Activated CD4-positive, alpha-beta T cell treated with anti-CD3 and anti-CD28 coated beads, Interleukin-2, amount 10 ng/mL, durations not matched to agents 24 days and 14 days (primary cell): ENCODE measurements at regions of chr15 and their contacts with region 1.

Region 1: DNA sequence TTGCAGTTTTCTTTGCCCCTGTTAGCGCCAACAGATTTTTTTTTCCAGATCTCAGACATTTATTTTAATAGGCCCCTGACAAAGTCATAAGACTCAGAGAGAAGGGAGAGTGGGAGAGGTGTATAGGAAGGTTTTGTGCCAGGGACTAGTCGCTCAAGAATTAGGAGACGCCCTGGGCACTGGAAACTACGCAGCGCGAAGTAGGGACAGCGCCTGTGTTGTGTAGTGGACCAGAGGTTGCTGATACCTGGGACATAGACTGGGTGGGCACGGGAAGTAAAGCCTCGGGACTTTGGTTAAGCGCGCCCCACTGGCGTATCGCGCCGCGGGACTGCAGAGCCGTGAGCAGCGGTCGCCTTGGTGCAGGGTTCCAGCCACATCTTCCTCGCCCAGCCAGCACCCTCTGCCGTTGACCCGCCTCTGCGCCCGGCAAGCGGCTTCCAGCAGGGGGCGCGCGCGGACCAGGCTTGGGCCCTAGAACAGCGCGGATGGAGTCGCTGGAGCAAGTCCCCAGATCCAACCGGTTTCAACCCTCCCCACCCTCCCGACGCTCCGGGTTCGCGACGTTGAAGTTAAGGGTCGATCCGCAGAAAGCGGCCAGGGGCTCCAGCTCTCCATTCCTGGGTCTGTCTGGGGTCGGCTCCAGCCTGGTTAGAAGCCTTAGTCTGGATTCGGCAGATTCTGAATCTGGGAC is 3.0 kb upstream of the ISLR2 start:
- DNase-seq: peak; percentile 96
- H3K4me3 Mint-ChIP-seq: peak overlapping the region; percentile 26
- H3K27ac Mint-ChIP-seq: no peak overlapping the region
- H3K4me1 Mint-ChIP-seq: peaks cover 11% of the 10 kb centered on the region
- H3K27me3 Mint-ChIP-seq: peaks cover 61% of the 10 kb centered on the region

Region 2: DNA sequence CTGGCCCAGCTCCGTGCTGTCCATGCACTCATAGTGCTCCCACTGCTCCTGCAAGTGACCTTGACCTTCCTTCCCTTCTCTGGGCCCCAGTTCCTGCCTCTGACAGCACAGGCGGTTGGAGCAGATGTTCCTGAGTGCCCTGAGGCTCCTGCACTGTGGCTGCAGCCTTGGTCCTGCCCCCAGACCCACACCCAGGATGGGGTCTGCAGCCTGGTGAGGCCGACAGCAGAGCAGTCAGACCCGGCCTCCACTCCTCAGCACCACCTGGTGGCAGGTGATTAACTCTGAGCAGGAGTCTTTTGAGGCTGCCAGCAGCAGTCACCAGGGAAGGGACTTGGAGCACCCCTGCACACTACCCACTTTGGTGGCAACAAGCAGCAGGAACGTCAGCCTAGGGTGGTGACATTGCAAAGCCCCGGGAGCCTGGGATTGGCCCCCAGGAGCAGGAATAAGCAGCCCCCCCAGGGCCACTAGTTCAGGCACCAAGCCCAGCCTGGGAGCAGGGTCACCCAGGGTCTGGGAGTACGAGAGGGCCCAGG is 175.5 kb after region 1 on chr15:
- intact Hi-C with region 1: loop called (anchors 1 kb)
- DNase-seq: peak; percentile 78
- H3K4me3 Mint-ChIP-seq: no peak overlapping the region
- H3K27ac Mint-ChIP-seq: no peak overlapping the region
- H3K4me1 Mint-ChIP-seq: no peaks in the 10 kb centered on the region
- H3K27me3 Mint-ChIP-seq: peaks cover 37% of the 10 kb centered on the region

Region 3: GRCh38 chr15:74322181-74323076 is 195.0 kb after region 1 on chr15:
- intact Hi-C with region 1: loop called (anchors 1 kb)
- DNase-seq: peak; percentile 85
- H3K4me3 Mint-ChIP-seq: no peak overlapping the region
- H3K27ac Mint-ChIP-seq: no peak overlapping the region
- H3K4me1 Mint-ChIP-seq: no peaks in the 10 kb centered on the region
- H3K27me3 Mint-ChIP-seq: peaks cover 9% of the 10 kb centered on the region

Region 4: GRCh38 chr15:74901612-74902082 is 774.2 kb after region 1 on chr15:
- intact Hi-C with region 1: no loop called
- DNase-seq: peak; percentile 91
- H3K4me3 Mint-ChIP-seq: no peak overlapping the region
- H3K27ac Mint-ChIP-seq: no peak overlapping the region
- H3K4me1 Mint-ChIP-seq: peaks cover 26% of the 10 kb centered on the region
- H3K27me3 Mint-ChIP-seq: no peaks in the 10 kb centered on the region